ENCODE measurements at regions of chr14 and their contacts with region 1.

Region 1: DNA sequence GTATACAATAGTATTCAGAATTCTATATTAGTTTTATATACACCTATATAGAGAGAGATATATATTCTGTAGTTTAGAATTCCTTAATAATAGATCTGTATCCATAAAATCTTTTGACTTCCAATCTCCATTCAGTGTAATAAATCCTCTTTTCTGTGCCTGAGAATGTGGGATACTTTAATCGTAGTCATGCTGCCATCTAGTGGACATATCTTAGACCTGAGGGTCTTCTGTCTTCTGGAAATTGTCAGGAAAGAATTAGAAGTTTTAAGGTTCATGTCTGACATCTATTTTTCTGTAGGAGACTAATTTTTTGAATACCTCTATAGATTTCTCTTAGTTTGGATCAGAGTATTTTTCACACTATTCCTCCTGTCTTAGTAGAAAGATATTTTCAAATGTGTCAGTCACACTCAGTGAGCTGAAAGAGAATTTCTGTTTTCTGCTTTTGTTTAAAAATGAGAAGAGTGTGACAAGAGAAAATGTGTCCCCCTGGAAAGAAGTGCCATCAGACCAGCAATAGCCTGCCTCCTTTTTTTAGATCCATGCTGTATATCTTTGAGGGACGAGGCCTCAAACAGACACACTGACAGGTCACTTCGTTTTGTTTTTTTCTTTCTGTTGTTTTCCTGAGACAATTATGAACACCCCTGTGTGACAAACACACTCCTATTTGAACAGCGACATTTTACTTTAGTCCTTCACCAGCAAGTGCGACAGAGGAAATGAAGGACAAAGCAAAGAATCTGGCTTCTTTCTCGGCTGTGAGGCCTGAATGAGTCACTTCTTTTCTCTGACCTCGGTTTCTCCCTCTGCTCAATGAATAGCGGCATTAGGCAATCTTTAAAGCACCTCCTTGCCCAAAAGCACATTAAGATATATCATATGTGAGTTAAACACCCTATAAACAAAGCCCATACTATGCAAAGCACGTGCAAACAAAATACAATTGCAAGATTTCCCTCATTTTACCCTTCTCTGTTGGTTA is 96.3 kb downstream of the GALC start:
- DNase-seq: no peak
- ATAC-seq: no peak

Region 2: DNA sequence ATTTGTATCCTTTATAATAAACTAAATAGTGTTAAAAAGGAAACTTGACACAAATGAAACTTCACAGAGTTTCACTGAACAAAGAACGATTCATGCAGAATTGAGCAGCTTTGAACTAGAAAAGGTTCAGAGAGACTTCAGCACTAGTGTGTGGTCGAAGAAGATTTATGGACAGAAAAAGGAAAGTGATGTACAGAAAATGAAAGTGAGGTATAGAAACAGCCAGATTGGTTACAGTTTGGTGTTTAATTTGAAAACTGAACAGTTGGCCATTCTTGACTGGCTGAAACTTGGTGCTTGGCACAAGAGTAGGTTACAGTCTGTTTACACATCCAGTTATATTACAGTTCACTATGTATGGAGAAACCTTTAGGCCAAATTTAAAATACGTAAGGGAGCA is 110.8 kb before region 1 on chr14:
- intact Hi-C with region 1: no loop called
- DNase-seq: no peak
- ATAC-seq: no peak

Region 3: DNA sequence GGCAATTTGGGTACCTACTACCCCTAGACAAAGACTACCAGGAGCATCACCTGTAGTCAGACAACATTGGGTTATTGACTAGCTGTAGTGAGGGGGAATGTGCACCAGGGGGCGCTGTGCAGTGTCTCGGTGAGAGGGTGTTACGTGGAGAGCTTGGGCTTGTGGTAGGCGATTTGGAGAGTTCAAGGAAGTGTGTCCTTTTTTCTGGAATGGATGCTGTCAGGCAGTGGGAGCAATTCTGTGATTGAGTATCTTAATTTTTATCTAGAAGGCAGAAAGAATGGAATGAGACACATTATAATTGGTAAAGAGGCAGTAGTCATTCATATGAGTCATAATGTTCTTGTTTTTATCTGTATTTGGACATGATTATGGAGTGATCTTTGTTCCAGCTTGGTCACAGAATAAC is 91.4 kb before region 1 on chr14:
- intact Hi-C with region 1: loop called (anchors 5 kb)
- DNase-seq: no peak
- ATAC-seq: no peak